AG04450 (cell line): ENCODE measurements at regions of chr11 and their contacts with region 1.

Region 1: GRCh38 chr11:111574373-111575225 is 27.6 kb upstream of the SIK2 start:
- DNase-seq: no peak
- H3K4me3 ChIP-seq: no peak overlapping the region
- H3K27ac ChIP-seq: no peak overlapping the region
- H3K27me3 ChIP-seq: no peaks in the 10 kb centered on the region
- CTCF ChIP-seq: no peak

Region 2: DNA sequence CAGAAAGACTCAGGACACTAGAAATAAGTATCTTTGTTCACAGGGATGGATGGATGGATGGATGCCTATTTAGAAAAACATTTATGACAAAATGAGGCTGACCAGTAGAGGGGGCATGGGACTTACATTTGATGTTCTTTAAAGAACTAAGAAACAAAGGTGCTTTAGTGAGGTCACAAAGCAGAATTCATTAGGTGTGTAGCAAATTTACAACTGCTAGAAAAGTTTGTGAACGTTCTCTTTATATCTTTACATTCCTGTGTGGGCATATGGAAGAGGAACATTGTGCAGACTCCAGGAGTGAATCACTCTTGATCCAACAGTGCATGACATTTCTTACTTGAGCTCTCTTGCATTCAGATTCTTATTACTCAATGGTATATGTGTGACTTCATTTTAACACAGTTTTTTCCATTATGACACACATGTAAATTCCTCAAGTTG is 11.8 kb after region 1 on chr11:
- CTCF ChIA-PET with region 1: interaction called, 13 read pairs
- POLR2A ChIA-PET with region 1: no interaction called
- DNase-seq: no peak
- H3K4me3 ChIP-seq: no peak overlapping the region
- H3K27ac ChIP-seq: no peak overlapping the region
- H3K27me3 ChIP-seq: no peaks in the 10 kb centered on the region
- CTCF ChIP-seq: peak; percentile 65

Region 3: GRCh38 chr11:111777094-111778046 is 202.8 kb after region 1 on chr11:
- CTCF ChIA-PET with region 1: no interaction called
- POLR2A ChIA-PET with region 1: no interaction called
- DNase-seq: peak; percentile 63
- H3K4me3 ChIP-seq: no peak overlapping the region
- H3K27ac ChIP-seq: no peak overlapping the region
- H3K27me3 ChIP-seq: no peaks in the 10 kb centered on the region
- CTCF ChIP-seq: peak; percentile 79